ENCODE measurements at regions of chr6 and their contacts with region 1.

Region 1: GRCh38 chr6:148395583-148396101 is 53.0 kb downstream of the SASH1 start:
- DNase-seq: peak in 1 of 2 donors; percentile 76
- H3K4me3 ChIP-seq: no peak overlapping the region
- H3K27ac ChIP-seq: peak overlapping the region; percentile 19 to 49
- H3K4me1 ChIP-seq: peaks cover 0 to 38% (median 19%) of the 10 kb centered on the region in 4 donors
- H3K27me3 ChIP-seq: no peaks in the 10 kb centered on the region
- CTCF ChIP-seq: no peak

Region 2: GRCh38 chr6:148367411-148368024 is 28.1 kb before region 1 on chr6:
- intact Hi-C with region 1: loop called (anchors 2 kb)
- DNase-seq: peak; percentile 62 to 76
- H3K4me3 ChIP-seq: no peak overlapping the region
- H3K27ac ChIP-seq: peak overlapping the region; percentile 29 to 58
- H3K4me1 ChIP-seq: peaks cover 0 to 60% (median 9%) of the 10 kb centered on the region in 4 donors
- H3K27me3 ChIP-seq: no peaks in the 10 kb centered on the region
- CTCF ChIP-seq: no peak

Measured in tibial artery (tissue), 4 donors.